ENCODE measurements at regions of chrX and their contacts with region 1.

Region 1: DNA sequence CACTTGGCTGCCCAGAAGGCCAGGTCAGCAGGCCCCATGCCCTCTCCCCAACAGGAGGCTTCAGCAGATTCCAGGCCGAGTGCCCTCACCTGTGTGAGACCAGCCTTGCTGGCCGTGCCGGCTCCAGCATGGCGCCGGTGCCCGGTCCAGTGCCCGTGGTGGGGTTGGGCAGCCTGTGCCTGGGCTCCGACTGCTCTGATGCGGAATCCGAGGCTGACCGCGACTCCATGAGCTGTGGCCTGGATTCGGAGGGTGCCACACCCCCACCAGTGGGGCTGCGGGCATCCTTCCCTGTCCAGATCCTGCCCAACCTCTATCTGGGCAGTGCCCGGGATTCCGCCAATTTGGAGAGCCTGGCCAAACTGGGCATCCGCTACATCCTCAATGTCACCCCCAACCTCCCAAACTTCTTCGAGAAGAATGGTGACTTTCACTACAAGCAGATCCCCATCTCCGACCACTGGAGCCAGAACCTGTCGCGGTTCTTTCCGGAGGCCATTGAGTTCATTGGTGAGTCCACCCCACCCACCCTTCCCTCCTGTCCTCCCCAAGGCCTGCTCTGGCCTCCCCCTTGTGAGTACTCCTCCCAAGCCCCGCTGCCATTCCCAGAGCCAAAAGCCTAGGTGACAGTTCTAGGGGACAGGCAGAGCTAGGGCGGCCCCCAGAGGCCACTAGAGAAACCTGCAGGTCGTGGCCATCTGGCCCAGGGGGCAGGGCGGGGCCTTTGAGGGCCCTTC is 2.3 kb downstream of the DUSP9 start:
- DNase-seq: peak; percentile 73
- ATAC-seq: peak; percentile 73
- H3K4me3 Mint-ChIP-seq: no peak overlapping the region
- H3K27ac Mint-ChIP-seq: no peak overlapping the region
- H3K4me1 Mint-ChIP-seq: no peaks in the 10 kb centered on the region
- H3K27me3 Mint-ChIP-seq: peaks cover 50% of the 10 kb centered on the region
- CTCF ChIP-seq: no peak

Region 2: DNA sequence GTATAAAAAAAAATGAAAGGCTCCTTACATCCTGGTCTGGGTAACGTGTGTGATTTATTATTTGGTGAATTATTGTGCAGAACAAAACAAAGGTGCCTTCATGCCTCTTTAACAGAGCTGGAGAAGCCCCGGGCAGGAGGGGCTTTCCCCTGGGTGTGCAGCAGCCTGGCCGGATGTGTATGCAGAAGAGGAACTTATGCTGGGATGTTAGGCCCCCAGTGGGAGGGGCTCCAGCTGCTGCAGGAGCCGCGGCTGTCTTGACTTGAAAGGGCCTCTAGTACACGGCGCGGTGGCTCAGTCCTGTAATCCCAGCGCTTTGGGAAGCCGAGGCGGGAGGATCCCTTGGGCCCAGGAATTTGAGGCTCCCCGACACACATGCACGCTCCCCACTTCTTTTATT is 66.5 kb before region 1 on chrX:
- CTCF ChIA-PET with region 1: interaction called, 19 read pairs
- POLR2A ChIA-PET with region 1: no interaction called
- DNase-seq: no peak
- ATAC-seq: no peak
- H3K4me3 Mint-ChIP-seq: no peak overlapping the region
- H3K27ac Mint-ChIP-seq: no peak overlapping the region
- H3K4me1 Mint-ChIP-seq: peaks cover 14% of the 10 kb centered on the region
- H3K27me3 Mint-ChIP-seq: no peaks in the 10 kb centered on the region; the same call in 1 of the 2 replicates
- CTCF ChIP-seq: no peak

Region 3: DNA sequence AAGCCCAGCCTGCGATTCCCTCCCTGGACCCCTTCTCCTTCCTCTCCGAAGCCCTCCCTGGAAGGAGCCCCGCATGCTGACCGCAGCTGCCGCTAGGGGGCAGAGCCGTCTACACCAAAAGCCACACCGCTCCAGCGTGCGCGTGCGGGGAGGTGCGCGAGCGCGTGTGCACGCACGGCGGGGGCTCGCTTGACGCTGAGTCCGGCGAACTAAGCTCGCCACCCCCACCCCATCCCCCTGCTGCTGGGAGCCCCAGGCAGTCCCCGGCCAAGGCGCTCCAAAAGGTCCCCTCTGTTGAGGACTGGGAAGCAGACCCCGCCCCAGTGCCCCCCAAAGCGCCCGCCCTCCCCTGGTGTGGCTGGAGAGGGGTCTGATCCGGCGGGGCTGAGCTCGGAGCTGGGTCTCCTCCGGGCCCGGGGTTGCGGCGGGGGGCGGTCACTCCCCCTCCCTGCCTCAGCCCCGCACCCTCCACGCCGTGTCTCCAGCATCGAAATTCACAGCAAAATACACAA is 39.4 kb before region 1 on chrX:
- CTCF ChIA-PET with region 1: interaction called, 22 read pairs
- POLR2A ChIA-PET with region 1: no interaction called
- DNase-seq: peak; percentile 87
- ATAC-seq: peak; percentile 94
- H3K4me3 Mint-ChIP-seq: peak overlapping the region; percentile 64
- H3K27ac Mint-ChIP-seq: no peak overlapping the region
- H3K4me1 Mint-ChIP-seq: no peaks in the 10 kb centered on the region
- H3K27me3 Mint-ChIP-seq: peaks cover 52% of the 10 kb centered on the region
- CTCF ChIP-seq: peak; percentile 59

Region 4: GRCh38 chrX:153662266-153662665 is 12.9 kb after region 1 on chrX:
- CTCF ChIA-PET with region 1: interaction called, 153 read pairs
- POLR2A ChIA-PET with region 1: interaction called, 3 read pairs
- DNase-seq: peak; percentile 75
- ATAC-seq: peak; percentile 81
- H3K4me3 Mint-ChIP-seq: peak overlapping the region; percentile 50
- H3K27ac Mint-ChIP-seq: no peak overlapping the region
- H3K4me1 Mint-ChIP-seq: no peaks in the 10 kb centered on the region; the same call in 1 of the 2 replicates
- H3K27me3 Mint-ChIP-seq: peaks cover 48% of the 10 kb centered on the region
- CTCF ChIP-seq: peak; percentile 30